Activated B cell treated with CpG ODN at 0.5 μM for 24 hours (primary cell): ENCODE measurements at regions of chr2 and their contacts with region 1.

Region 1: GRCh38 chr2:191521608-191522208 is 156.2 kb upstream of the NABP1 start:
- DNase-seq: no peak
- ATAC-seq: no peak
- H3K4me3 Mint-ChIP-seq: no peak overlapping the region
- H3K27ac Mint-ChIP-seq: no peak overlapping the region
- H3K4me1 Mint-ChIP-seq: no peaks in the 10 kb centered on the region
- H3K27me3 Mint-ChIP-seq: peaks cover 9% of the 10 kb centered on the region
- CTCF ChIP-seq: peak; percentile 78

Region 2: DNA sequence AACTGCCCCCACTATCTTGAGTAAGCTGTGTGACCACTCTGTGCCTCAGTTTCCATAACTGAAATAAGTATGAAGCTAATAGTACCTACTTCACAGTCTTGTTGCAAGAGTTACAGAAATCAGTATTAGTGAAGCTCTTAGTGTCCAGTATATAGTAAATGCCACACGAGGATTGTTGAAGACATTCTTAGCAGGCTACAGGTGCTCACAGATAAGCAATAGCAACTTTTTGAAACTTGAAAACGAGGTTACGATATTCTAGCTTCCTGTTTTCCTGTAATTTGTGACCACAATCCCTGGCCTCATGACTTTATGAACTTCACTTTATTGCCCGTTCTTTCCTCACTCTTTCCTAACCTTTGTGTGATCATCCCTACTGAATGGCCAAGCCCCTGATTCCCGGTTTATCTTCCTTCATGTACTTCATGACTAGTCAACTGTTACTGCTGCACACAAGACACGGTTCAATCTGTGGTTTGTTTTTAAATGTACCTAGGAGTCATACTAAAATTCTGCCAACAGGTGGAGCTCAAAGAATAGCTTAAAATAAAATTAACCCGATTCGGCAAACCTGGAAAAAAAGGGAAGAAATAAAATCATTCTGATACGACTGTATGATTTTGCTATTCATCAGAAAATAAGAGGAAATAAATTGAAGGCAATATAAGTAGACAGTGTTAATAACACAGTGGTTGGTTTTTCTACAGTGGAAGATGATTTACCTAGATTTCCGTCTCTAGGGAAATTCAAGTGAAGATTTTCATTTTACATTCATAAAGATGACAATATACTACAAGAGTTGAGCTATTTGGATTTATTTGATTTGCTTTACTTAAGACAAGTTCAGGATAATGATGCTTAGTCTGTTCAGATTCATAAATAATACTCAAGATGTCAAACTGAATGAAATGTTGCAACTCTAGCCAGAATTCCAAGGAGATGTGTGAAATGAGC is 469.6 kb before region 1 on chr2:
- CTCF ChIA-PET with region 1: interaction called, 13 read pairs
- POLR2A ChIA-PET with region 1: no interaction called
- intact Hi-C with region 1: loop called (anchors 1 kb)
- DNase-seq: no peak
- ATAC-seq: peak; percentile 62
- H3K4me3 Mint-ChIP-seq: no peak overlapping the region
- H3K27ac Mint-ChIP-seq: no peak overlapping the region
- H3K4me1 Mint-ChIP-seq: no peaks in the 10 kb centered on the region
- H3K27me3 Mint-ChIP-seq: peaks cover 9% of the 10 kb centered on the region
- CTCF ChIP-seq: peak; percentile 70

Region 3: DNA sequence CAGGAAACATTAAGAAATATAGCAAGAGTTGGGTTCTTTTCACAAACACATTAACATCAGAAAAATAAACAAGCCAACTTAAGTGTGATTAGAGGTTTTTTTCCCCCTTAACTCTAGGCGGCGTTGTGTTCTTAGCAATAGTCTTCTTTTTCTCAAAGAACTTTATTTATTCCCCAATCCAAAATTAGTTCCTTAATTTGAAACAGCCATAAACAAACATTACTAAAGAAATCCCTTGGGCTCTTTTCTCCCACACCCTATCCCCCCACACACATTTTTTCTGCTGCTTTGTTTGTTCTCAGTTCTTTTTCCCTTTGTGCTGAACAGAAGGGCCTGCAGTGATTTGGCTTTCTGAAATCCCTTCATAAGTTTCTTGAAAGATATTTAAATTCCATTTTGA is 289.7 kb before region 1 on chr2:
- CTCF ChIA-PET with region 1: interaction called, 8 read pairs
- POLR2A ChIA-PET with region 1: no interaction called
- intact Hi-C with region 1: loop called (anchors 1 kb)
- DNase-seq: no peak
- ATAC-seq: no peak
- H3K4me3 Mint-ChIP-seq: no peak overlapping the region
- H3K27ac Mint-ChIP-seq: no peak overlapping the region
- H3K4me1 Mint-ChIP-seq: no peaks in the 10 kb centered on the region
- H3K27me3 Mint-ChIP-seq: no peaks in the 10 kb centered on the region
- CTCF ChIP-seq: no peak